ENCODE measurements at regions of chr3 and their contacts with region 1.

Region 1: GRCh38 chr3:16319307-16319706 is 54.3 kb downstream of the OXNAD1 start:
- DNase-seq: peak; percentile 58 to 91 (median 76)
- ATAC-seq: peak; percentile 72 to 85 (median 76)
- H3K4me3 ChIP-seq: no peak overlapping the region
- H3K4me3 Mint-ChIP-seq: peak overlapping the region in 2 of 3 donors; percentile 28 to 81
- H3K27ac ChIP-seq: peak overlapping the region; percentile 43
- H3K27ac Mint-ChIP-seq: peak overlapping the region; percentile 91 to 98
- H3K4me1 ChIP-seq: peaks cover 46 to 65% of the 10 kb centered on the region in 2 experiments
- H3K4me1 Mint-ChIP-seq: peaks cover 76 to 84% (median 81%) of the 10 kb centered on the region in 3 donors
- H3K27me3 ChIP-seq: no peaks in the 10 kb centered on the region
- H3K27me3 Mint-ChIP-seq: no peaks in the 10 kb centered on the region

Region 2: DNA sequence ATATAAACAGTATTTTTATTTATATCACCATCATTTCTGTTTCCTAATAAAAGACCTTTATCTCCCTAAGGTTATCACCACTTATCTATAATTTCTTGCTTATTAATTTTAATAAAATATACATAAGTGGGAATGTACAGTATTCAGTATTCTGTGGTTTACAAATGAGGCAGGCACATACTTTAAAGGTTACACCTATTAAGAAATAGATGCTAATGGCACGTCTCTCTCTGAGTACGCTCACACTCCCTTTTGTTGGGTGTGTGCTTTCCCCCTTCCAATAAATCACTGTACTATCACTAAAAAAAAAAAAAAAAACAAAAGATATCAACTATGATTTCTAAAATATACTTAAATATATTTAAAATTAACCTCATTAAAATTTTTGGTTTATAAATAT is 45.4 kb before region 1 on chr3:
- CTCF ChIA-PET with region 1: interaction called, 5 to 38 read pairs
- POLR2A ChIA-PET with region 1: interaction called in 1 of 2 experiments, 5 read pairs
- DNase-seq: no peak
- ATAC-seq: no peak
- H3K4me3 ChIP-seq: no peak overlapping the region
- H3K4me3 Mint-ChIP-seq: no peak overlapping the region
- H3K27ac ChIP-seq: no peak overlapping the region
- H3K27ac Mint-ChIP-seq: no peak overlapping the region
- H3K4me1 ChIP-seq: no peaks in the 10 kb centered on the region
- H3K4me1 Mint-ChIP-seq: peaks cover 0 to 1% (median under 1%) of the 10 kb centered on the region in 3 donors
- H3K27me3 ChIP-seq: no peaks in the 10 kb centered on the region
- H3K27me3 Mint-ChIP-seq: no peaks in the 10 kb centered on the region

Region 3: DNA sequence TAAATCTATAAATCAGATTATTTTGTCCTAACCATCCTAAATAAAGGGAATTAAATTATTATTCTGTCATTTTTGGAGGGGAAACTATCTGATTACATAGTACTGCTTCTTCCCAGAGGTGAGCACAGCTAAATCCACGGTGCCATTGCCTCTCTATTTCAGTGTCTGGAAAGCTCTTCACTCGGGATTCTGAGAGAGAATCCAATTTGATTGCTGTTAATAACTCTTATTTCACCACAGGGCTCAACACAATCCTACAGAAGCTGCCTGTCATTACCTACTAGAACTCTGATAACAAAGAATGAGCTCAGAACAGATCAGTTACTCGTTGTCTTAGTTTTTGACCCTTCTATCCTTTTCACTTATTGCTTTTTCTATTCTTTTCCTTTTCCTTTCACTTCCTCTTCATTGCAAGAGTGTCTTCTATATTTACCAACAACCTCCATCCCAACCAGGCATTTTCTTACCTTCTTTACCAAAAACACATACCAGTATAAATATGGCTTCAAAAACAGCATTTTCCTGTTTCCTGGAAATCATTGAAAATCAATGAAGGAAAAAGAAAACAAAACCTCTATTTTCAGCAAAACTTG is 23.9 kb before region 1 on chr3:
- CTCF ChIA-PET with region 1: interaction called, 13 to 75 read pairs
- POLR2A ChIA-PET with region 1: interaction called, 4 to 5 read pairs
- DNase-seq: no peak
- ATAC-seq: no peak
- H3K4me3 ChIP-seq: peak overlapping the region in 1 of 2 donors; percentile 17
- H3K4me3 Mint-ChIP-seq: peak overlapping the region; percentile 59 to 88 (median 64)
- H3K27ac ChIP-seq: peak overlapping the region; percentile 49
- H3K27ac Mint-ChIP-seq: peak overlapping the region; percentile 89 to 98
- H3K4me1 ChIP-seq: peaks cover 38 to 78% of the 10 kb centered on the region in 2 experiments
- H3K4me1 Mint-ChIP-seq: peaks cover 92 to 94% (median 92%) of the 10 kb centered on the region in 3 donors
- H3K27me3 ChIP-seq: no peaks in the 10 kb centered on the region
- H3K27me3 Mint-ChIP-seq: no peaks in the 10 kb centered on the region